GM12878 (cell line): ENCODE measurements at regions of chr15 and their contacts with region 1.

Region 1: GRCh38 chr15:73560501-73561117 is 72.6 kb downstream of the NPTN start:
- DNase-seq: peak; percentile 9
- ATAC-seq: peak; percentile 77
- H3K4me3 ChIP-seq: no peak overlapping the region
- H3K27ac ChIP-seq: no peak overlapping the region
- H3K4me1 ChIP-seq: no peaks in the 10 kb centered on the region
- H3K27me3 ChIP-seq: no peaks in the 10 kb centered on the region
- CTCF ChIP-seq: peak; percentile 31 to 57 (median 39); a peak in 5 of 6 replicates
- EP300 ChIP-seq: no peak
- POLR2A ChIP-seq: no peak
- RAD21 ChIP-seq: peak; percentile 80

Region 2: GRCh38 chr15:73305331-73306211 is 255.0 kb before region 1 on chr15:
- CTCF ChIA-PET with region 1: no interaction called
- POLR2A ChIA-PET with region 1: no interaction called
- RAD21 ChIA-PET with region 1: no interaction called
- SMC1A ChIA-PET with region 1: no interaction called
- in situ Hi-C with region 1: no loop called
- intact Hi-C with region 1: loop called (anchors 5 kb)
- DNase-seq: no peak
- ATAC-seq: peak; percentile 87
- H3K4me3 ChIP-seq: no peak overlapping the region
- H3K27ac ChIP-seq: no peak overlapping the region
- H3K4me1 ChIP-seq: no peaks in the 10 kb centered on the region
- H3K27me3 ChIP-seq: no peaks in the 10 kb centered on the region
- CTCF ChIP-seq: peak; percentile 48 to 68 (median 67); a peak in 5 of 6 replicates
- EP300 ChIP-seq: no peak
- POLR2A ChIP-seq: no peak
- RAD21 ChIP-seq: peak; percentile 68

Region 3: DNA sequence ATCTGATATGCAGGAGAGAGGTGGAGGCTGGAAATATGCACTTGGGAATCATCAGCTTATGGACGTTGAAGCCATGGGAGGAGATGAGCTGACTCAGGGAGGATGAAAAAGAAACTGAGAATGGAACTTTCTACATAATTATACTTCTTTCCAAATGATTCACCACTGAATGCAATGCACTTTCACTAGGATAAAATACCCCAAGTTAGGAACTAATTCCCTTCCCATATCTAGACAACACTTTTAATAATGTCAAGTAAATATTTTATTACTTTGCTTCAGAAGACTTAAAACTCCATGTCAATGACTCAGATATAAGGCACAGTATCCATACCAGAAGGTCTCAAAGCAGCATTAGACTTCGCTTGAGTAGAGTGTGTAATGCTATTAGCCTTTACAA is 48.3 kb after region 1 on chr15:
- CTCF ChIA-PET with region 1: interaction called, 14 read pairs
- POLR2A ChIA-PET with region 1: no interaction called
- RAD21 ChIA-PET with region 1: interaction called, 3 read pairs
- SMC1A ChIA-PET with region 1: interaction called, 6 read pairs
- in situ Hi-C with region 1: no loop called
- intact Hi-C with region 1: no loop called
- DNase-seq: no peak
- ATAC-seq: peak; percentile 59
- H3K4me3 ChIP-seq: no peak overlapping the region
- H3K27ac ChIP-seq: 0 out of 2 replicates have a peak overlapping the region, but pooled peaks have one; percentile 16
- H3K4me1 ChIP-seq: peaks cover 27% of the 10 kb centered on the region; the same call in 1 of the 2 replicates
- H3K27me3 ChIP-seq: no peaks in the 10 kb centered on the region
- CTCF ChIP-seq: no peak
- EP300 ChIP-seq: no peak
- POLR2A ChIP-seq: no peak
- RAD21 ChIP-seq: no peak

Region 4: GRCh38 chr15:73704869-73705645 is 144.4 kb after region 1 on chr15:
- CTCF ChIA-PET with region 1: interaction called, 34 read pairs
- POLR2A ChIA-PET with region 1: no interaction called
- RAD21 ChIA-PET with region 1: interaction called, 4 read pairs
- SMC1A ChIA-PET with region 1: interaction called, 3 read pairs
- in situ Hi-C with region 1: no loop called
- intact Hi-C with region 1: loop called (anchors 1 kb)
- DNase-seq: no peak
- ATAC-seq: peak; percentile 91
- H3K4me3 ChIP-seq: no peak overlapping the region
- H3K27ac ChIP-seq: no peak overlapping the region
- H3K4me1 ChIP-seq: no peaks in the 10 kb centered on the region
- H3K27me3 ChIP-seq: no peaks in the 10 kb centered on the region; a peak in 1 of 4 replicates
- CTCF ChIP-seq: peak; percentile 82 to 88 (median 86)
- EP300 ChIP-seq: no peak
- POLR2A ChIP-seq: no peak
- RAD21 ChIP-seq: peak; percentile 57